SK-N-SH (cell line): ENCODE measurements at regions of chr12 and their contacts with region 1.

Region 1: GRCh38 chr12:107131832-107132616 is 38.7 kb upstream of the CRY1 start:
- DNase-seq: peak; percentile 52
- H3K4me3 ChIP-seq: peak overlapping the region in 1 of 2 experiments; percentile 28; a peak in 1 of 4 replicates
- H3K27ac ChIP-seq: peak overlapping the region in 1 of 2 experiments; percentile 76; a peak in 1 of 4 replicates
- H3K4me1 ChIP-seq: peaks cover 0 to 19% of the 10 kb centered on the region in 2 experiments; a peak in 2 of 4 replicates
- H3K27me3 ChIP-seq: no peaks in the 10 kb centered on the region
- CTCF ChIP-seq: peak; percentile 94
- EP300 ChIP-seq: no peak
- RAD21 ChIP-seq: peak; percentile 97

Region 2: GRCh38 chr12:106945261-106945851 is 186.7 kb before region 1 on chr12:
- CTCF ChIA-PET with region 1: no interaction called
- POLR2A ChIA-PET with region 1: no interaction called
- DNase-seq: no peak
- H3K4me3 ChIP-seq: no peak overlapping the region
- H3K27ac ChIP-seq: no peak overlapping the region
- H3K4me1 ChIP-seq: no peaks in the 10 kb centered on the region
- H3K27me3 ChIP-seq: no peaks in the 10 kb centered on the region
- CTCF ChIP-seq: no peak
- EP300 ChIP-seq: no peak
- RAD21 ChIP-seq: no peak

Region 3: GRCh38 chr12:107109741-107110719 is 22.0 kb before region 1 on chr12:
- CTCF ChIA-PET with region 1: interaction called, 14 read pairs
- POLR2A ChIA-PET with region 1: no interaction called
- DNase-seq: no peak
- H3K4me3 ChIP-seq: no peak overlapping the region
- H3K27ac ChIP-seq: no peak overlapping the region
- H3K4me1 ChIP-seq: no peaks in the 10 kb centered on the region
- H3K27me3 ChIP-seq: no peaks in the 10 kb centered on the region; the same call in 1 of the 2 replicates
- CTCF ChIP-seq: no peak
- EP300 ChIP-seq: no peak
- RAD21 ChIP-seq: no peak

Region 4: GRCh38 chr12:107311682-107312081 is 179.7 kb after region 1 on chr12:
- CTCF ChIA-PET with region 1: interaction called, 52 read pairs
- POLR2A ChIA-PET with region 1: no interaction called
- DNase-seq: no peak
- H3K4me3 ChIP-seq: no peak overlapping the region
- H3K27ac ChIP-seq: no peak overlapping the region
- H3K4me1 ChIP-seq: no peaks in the 10 kb centered on the region
- H3K27me3 ChIP-seq: no peaks in the 10 kb centered on the region; the same call in 1 of the 2 replicates
- CTCF ChIP-seq: no peak
- EP300 ChIP-seq: no peak
- RAD21 ChIP-seq: no peak

Region 5: DNA sequence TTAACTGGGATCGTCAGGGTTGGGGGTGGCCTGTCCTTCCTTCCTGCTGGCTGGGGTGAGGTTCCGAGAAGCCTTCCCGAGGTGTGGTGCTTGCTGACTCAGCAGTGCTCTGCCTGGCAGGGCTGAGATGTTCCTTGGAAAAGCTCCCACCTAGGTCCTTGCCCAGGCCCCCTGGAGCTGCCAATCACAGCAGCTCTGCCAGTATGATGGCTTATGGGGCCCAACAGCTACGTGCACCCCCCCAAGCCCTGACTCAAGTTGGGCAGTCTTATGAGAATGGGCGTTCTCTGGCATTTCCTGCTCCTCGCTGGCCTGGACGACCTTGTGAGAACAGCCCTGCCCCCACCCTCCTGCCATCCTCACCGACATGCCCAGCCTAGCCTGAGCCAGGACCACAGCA is 253.5 kb after region 1 on chr12:
- CTCF ChIA-PET with region 1: interaction called, 12 read pairs
- POLR2A ChIA-PET with region 1: no interaction called
- DNase-seq: no peak
- H3K4me3 ChIP-seq: no peak overlapping the region
- H3K27ac ChIP-seq: no peak overlapping the region
- H3K4me1 ChIP-seq: peaks cover under 1 to 28% of the 10 kb centered on the region in 2 experiments; a peak in 2 of 4 replicates
- H3K27me3 ChIP-seq: no peaks in the 10 kb centered on the region
- CTCF ChIP-seq: no peak
- EP300 ChIP-seq: no peak
- RAD21 ChIP-seq: no peak

Region 6: DNA sequence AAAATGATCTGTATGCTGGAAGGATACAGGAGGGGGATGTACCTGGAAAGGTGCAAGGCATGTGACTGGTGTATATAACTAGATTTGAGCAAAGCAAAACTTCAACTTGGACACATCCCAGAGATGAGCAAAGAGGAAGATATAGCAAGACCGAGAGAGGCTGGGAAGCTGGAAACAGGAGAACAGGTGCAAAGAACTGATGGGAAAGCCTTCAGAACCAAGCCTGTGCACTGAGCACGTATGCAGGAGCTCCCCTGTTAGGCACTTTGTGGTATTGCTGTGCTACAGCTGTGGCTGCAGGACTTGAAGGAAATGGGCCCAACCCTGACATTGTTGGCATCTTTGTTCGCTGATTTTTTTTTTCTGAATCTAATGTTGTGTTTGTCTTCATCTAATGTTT is 432.9 kb after region 1 on chr12:
- CTCF ChIA-PET with region 1: interaction called, 11 read pairs
- POLR2A ChIA-PET with region 1: no interaction called
- DNase-seq: no peak
- H3K4me3 ChIP-seq: no peak overlapping the region
- H3K27ac ChIP-seq: no peak overlapping the region
- H3K4me1 ChIP-seq: peaks cover 0 to 4% of the 10 kb centered on the region in 2 experiments; a peak in 1 of 4 replicates
- H3K27me3 ChIP-seq: no peaks in the 10 kb centered on the region
- CTCF ChIP-seq: no peak; the same call in 1 of the 2 replicates
- EP300 ChIP-seq: no peak
- RAD21 ChIP-seq: peak; percentile 66

Region 7: DNA sequence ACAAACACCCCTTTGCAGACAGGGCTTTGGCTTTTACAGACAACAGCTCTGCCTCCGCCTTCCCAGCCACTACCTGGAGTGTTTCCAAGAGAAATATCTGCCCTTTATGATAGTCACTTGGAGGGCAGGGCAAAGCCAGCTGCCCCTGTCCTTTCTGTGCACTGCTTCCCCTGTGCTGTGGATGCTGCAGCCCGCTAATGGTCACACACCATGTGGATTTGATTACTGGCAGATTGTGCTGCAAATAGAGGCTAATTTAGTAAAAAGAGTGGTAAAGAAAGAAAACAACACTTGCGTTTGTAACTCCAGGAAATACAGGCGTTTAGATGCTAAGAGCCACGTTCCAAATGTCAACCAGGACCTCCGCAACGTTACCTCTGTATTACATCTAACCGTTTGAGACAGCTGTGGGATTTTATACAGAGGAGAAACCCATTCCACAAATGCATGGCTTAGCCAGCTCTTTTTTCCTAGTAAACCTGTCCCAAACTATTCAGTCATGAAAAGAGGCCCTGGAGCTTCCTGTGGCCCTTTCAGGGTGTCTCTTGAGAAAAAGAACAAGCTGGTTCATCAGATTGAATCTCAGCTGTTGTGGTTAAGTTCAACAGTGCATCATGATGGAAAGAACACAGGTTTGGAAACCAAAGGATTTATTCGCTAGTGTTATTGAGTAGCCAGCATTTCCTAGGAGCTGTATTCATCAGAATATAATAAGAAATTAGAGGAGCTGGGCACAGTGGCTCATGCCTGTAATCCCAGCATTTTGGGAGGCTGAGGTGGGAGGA is 523.4 kb after region 1 on chr12:
- CTCF ChIA-PET with region 1: interaction called, 11 read pairs
- POLR2A ChIA-PET with region 1: no interaction called
- DNase-seq: peak; percentile 84
- H3K4me3 ChIP-seq: no peak overlapping the region
- H3K27ac ChIP-seq: peak overlapping the region in 1 of 2 experiments; percentile 98; a peak in 2 of 4 replicates
- H3K4me1 ChIP-seq: peaks cover 0 to 33% of the 10 kb centered on the region in 2 experiments; a peak in 2 of 4 replicates
- H3K27me3 ChIP-seq: no peaks in the 10 kb centered on the region
- CTCF ChIP-seq: no peak
- EP300 ChIP-seq: peak in 1 of 2 experiments; percentile 67; a peak in 1 of 4 replicates
- RAD21 ChIP-seq: peak; percentile 5; the same call in 1 of the 2 replicates